Activated CD4-positive, alpha-beta T cell treated with anti-CD3 and anti-CD28 coated beads for 36 hours (primary cell): ENCODE measurements at regions of chr6 and their contacts with region 1.

Region 1: DNA sequence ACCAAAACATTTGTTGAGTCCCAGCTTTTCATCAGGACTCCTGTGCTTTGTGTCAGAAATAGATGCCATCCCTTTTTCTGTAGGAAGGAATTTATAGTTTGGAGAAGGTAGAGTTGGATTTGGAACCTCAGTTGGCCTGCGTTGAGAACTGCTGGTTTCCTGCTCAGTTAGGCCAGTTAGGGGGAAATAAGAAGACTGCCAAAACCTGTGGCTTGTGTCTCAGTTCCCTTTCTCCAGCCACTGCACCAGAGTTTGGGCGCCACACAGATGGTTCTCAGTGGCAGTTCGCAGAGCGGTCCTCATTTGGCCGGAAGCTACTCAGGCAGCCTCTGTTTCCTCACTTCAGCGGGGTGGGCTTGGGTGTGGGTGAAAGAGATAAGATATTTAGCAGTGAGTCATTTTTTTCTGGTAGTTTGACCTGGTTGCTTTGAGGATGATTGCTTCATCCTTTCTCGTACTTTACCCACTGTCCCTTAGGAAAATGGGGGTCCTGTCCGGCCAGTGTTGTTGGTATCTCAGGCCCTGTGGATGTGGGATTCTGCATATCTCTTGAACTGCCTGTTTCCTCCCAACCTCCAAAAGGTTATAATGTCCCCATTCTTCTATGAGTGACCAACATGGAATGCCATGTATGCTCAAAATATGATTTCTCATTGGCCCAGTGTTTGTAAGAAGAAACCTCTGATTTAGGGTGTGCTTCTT is 53.7 kb downstream of the JARID2 start:
- DNase-seq: peak; percentile 48
- ATAC-seq: no peak
- H3K4me3 Mint-ChIP-seq: peak overlapping the region; percentile 18
- H3K27ac Mint-ChIP-seq: peak overlapping the region; percentile 69
- H3K4me1 Mint-ChIP-seq: peaks cover 83% of the 10 kb centered on the region
- H3K27me3 Mint-ChIP-seq: no peaks in the 10 kb centered on the region

Region 2: GRCh38 chr6:14857501-14857900 is 442.1 kb before region 1 on chr6:
- CTCF ChIA-PET with region 1: no interaction called
- POLR2A ChIA-PET with region 1: no interaction called
- intact Hi-C with region 1: loop called in 1 of 2 experiments (anchors 2 kb)
- DNase-seq: peak; percentile 80
- ATAC-seq: peak; percentile 71
- H3K4me3 Mint-ChIP-seq: peak overlapping the region; percentile 7
- H3K27ac Mint-ChIP-seq: peak overlapping the region; percentile 95
- H3K4me1 Mint-ChIP-seq: peaks cover 48% of the 10 kb centered on the region
- H3K27me3 Mint-ChIP-seq: no peaks in the 10 kb centered on the region